ENCODE measurements at regions of chr1 and their contacts with region 1.

Region 1: GRCh38 chr1:109790735-109791494 is 27.2 kb upstream of the EPS8L3 start:
- DNase-seq: peak; percentile 95
- ATAC-seq: peak; percentile 94
- H3K4me3 Mint-ChIP-seq: no peak overlapping the region
- H3K27ac Mint-ChIP-seq: peak overlapping the region; percentile 92
- H3K4me1 Mint-ChIP-seq: peaks cover 63% of the 10 kb centered on the region
- H3K27me3 Mint-ChIP-seq: no peaks in the 10 kb centered on the region
- CTCF ChIP-seq: peak; percentile 80

Region 2: GRCh38 chr1:109802901-109803561 is 12.1 kb after region 1 on chr1:
- CTCF ChIA-PET with region 1: interaction called, 63 read pairs
- POLR2A ChIA-PET with region 1: interaction called, 13 read pairs
- intact Hi-C with region 1: no loop called
- DNase-seq: no peak
- ATAC-seq: no peak
- H3K4me3 Mint-ChIP-seq: peak overlapping the region; percentile 61
- H3K27ac Mint-ChIP-seq: peak overlapping the region; percentile 97
- H3K4me1 Mint-ChIP-seq: peaks cover 58% of the 10 kb centered on the region
- H3K27me3 Mint-ChIP-seq: no peaks in the 10 kb centered on the region
- CTCF ChIP-seq: no peak

Region 3: DNA sequence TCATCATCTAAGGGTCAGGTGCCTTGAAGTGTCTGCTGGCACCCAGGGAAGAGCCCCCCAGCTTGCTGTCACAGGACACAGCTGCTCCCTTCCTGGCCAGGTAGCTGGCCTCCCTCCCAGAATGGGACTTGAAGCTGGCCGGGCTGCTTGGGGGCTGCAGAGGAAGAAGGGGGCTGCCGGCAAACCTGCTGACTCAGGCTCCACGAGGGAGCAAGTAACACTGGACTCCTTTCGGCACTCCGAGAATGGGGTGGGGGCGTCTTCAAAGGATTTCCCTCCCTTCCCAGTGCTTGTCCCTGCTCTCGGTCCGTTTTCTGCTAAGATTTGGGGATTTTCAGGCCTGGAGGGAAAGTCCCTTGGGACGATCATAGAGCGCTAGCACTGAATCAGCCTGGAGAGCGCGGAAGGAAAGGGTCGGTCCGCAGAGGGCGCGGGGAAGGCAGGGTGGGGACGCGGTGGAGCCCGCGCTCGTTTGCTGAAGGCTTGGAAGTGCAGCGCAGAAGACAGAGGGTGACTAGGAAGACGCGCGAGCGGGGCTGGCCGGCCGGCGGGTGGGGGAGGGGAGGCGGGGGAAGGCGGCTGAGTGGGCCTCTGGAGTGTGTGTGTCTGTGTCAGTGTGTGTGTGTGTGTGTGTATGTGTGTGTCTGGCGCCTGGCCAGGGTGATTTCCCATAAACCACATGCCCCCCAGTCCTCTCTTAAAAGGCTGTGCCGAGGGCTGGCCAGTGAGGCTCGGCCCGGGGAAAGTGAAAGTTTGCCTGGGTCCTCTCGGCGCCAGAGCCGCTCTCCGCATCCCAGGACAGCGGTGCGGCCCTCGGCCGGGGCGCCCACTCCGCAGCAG is 119.4 kb after region 1 on chr1 and contains the start of gene CSF1:
- CTCF ChIA-PET with region 1: interaction called, 21 read pairs
- POLR2A ChIA-PET with region 1: interaction called, 11 read pairs
- intact Hi-C with region 1: loop called (anchors 5 kb)
- DNase-seq: peak; percentile 78
- ATAC-seq: peak; percentile 41
- H3K4me3 Mint-ChIP-seq: peak within 1 kb of the TSS; percentile 90
- H3K27ac Mint-ChIP-seq: peak within 1 kb of the TSS; percentile 95
- H3K4me1 Mint-ChIP-seq: peaks cover 70% of the 10 kb centered on the region
- H3K27me3 Mint-ChIP-seq: no peaks in the 10 kb centered on the region
- CTCF ChIP-seq: no peak
- total RNA-seq, gene CSF1: 28.3 to 33.3 TPM

Measured in activated CD8-positive, alpha-beta T cell treated with anti-CD3 and anti-CD28 coated beads for 36 hours (primary cell).